Calu3 (cell line): ENCODE measurements at regions of chrX and their contacts with region 1.

Region 1: DNA sequence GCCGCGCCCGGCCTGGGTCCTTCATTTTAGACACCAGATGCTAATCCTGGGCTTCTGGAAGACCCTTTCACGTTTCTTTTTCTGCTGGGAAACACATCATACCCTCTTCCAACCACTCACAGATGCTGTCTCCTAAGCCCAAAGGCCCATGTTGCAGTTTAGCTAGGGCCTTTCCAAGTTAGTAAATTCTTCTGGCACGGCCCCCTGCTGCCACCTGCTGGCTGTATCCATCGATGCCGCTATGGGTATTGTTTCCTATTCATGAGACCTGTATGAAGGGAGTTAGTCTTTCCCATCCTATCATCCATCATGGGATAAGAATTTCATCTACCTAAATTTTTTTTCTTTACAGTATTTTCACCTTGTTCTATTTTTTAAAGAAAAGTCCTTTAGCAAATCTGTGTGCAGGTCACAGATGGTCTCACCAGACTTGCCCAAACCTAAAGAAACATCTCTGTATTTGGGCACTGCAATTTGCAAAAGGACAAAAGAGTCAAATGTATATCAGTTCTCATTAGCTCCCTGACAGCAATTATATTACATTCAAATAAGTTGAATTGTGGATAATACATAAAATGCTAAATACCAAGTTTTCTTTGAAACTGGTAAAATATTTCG is 37.8 kb upstream of the SLC9A7 start:
- DNase-seq: peak; percentile 82
- H3K4me3 Mint-ChIP-seq: no peak overlapping the region
- H3K27ac Mint-ChIP-seq: peak overlapping the region; percentile 73
- H3K4me1 Mint-ChIP-seq: peaks cover 21% of the 10 kb centered on the region
- H3K27me3 Mint-ChIP-seq: no peaks in the 10 kb centered on the region
- CTCF ChIP-seq: peak; percentile 71

Region 2: DNA sequence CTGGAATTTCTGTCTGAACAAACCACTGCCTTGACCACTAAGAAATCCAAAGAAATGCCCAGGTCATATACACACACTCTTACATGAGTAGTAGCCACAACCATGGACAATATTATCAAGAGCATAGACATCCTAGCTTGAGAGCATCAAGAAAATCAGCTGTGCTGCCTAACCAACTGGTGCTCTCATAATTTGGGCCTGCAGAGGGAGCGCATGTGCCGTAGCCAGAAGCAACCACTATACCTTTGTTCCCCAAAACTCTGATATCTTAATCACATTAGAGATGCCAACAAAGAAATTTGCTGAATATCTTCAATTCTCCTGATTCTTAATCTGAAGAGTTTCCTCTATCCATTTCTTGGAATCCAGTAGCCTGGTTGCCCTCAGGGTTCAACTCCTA is 415.1 kb before region 1 on chrX:
- CTCF ChIA-PET with region 1: no interaction called
- intact Hi-C with region 1: loop called (anchors 5 kb)
- DNase-seq: peak; percentile 53
- H3K4me3 Mint-ChIP-seq: no peak overlapping the region
- H3K27ac Mint-ChIP-seq: no peak overlapping the region
- H3K4me1 Mint-ChIP-seq: peaks cover 22% of the 10 kb centered on the region
- H3K27me3 Mint-ChIP-seq: no peaks in the 10 kb centered on the region
- CTCF ChIP-seq: no peak

Region 3: GRCh38 chrX:46554942-46555341 is 241.7 kb before region 1 on chrX:
- CTCF ChIA-PET with region 1: interaction called, 4 read pairs
- intact Hi-C with region 1: loop called (anchors 1 kb)
- DNase-seq: no peak
- H3K4me3 Mint-ChIP-seq: no peak overlapping the region
- H3K27ac Mint-ChIP-seq: no peak overlapping the region
- H3K4me1 Mint-ChIP-seq: no peaks in the 10 kb centered on the region
- H3K27me3 Mint-ChIP-seq: no peaks in the 10 kb centered on the region
- CTCF ChIP-seq: no peak

Region 4: GRCh38 chrX:46686003-46686645 is 110.6 kb before region 1 on chrX:
- CTCF ChIA-PET with region 1: no interaction called
- intact Hi-C with region 1: loop called (anchors 2 kb)
- DNase-seq: peak; percentile 17
- H3K4me3 Mint-ChIP-seq: no peak overlapping the region
- H3K27ac Mint-ChIP-seq: peak overlapping the region; percentile 61
- H3K4me1 Mint-ChIP-seq: peaks cover 8% of the 10 kb centered on the region
- H3K27me3 Mint-ChIP-seq: no peaks in the 10 kb centered on the region
- CTCF ChIP-seq: peak; percentile 38

Region 5: DNA sequence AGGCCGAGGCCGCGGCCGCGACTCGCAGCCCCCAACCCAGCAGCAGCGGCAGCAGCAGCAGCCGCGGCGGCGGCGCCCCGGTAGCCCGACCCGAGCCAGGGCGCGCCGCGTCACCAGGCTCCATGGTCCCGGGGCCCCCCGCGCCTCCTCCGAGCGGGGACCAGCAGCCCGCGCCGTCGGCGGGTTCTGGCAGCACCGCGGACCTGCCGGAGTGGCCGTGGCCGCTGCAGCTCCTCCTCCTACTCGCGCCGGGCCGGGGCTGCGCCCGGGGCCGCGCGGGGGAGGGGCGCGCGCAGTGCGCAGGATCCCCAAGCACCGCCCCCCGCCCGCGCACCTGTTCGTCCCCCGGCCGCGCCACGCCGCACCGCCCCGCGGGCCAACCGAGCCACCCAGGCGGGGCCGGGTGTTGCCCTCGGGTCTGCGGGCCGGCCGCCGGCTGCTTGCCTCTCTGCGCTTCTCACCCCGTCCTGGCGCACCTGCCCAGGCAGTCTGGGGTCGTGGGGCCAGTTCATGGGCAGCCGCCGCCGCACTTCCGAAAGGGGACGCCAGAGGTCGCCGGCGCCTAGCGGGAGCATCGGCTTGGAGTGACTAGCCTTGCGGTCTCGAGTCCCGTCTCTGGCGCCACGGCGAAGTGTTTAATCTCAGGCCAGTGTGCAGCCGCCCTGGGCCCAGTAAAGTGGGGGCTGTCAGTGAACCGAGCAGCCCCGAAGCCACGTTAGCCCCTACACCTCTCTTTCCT is 37.6 kb before region 1 on chrX and contains the start of gene SLC9A7:
- CTCF ChIA-PET with region 1: interaction called, 19 read pairs
- intact Hi-C with region 1: loop called (anchors 1 kb)
- DNase-seq: peak; percentile 92
- H3K4me3 Mint-ChIP-seq: peak within 1 kb of the TSS; percentile 96
- H3K27ac Mint-ChIP-seq: peak within 1 kb of the TSS; percentile 82
- H3K4me1 Mint-ChIP-seq: peaks cover 23% of the 10 kb centered on the region
- H3K27me3 Mint-ChIP-seq: no peaks in the 10 kb centered on the region
- CTCF ChIP-seq: peak; percentile 76
- total RNA-seq, gene SLC9A7: 66.4 and 83.3 TPM in 2 replicates

Region 6: DNA sequence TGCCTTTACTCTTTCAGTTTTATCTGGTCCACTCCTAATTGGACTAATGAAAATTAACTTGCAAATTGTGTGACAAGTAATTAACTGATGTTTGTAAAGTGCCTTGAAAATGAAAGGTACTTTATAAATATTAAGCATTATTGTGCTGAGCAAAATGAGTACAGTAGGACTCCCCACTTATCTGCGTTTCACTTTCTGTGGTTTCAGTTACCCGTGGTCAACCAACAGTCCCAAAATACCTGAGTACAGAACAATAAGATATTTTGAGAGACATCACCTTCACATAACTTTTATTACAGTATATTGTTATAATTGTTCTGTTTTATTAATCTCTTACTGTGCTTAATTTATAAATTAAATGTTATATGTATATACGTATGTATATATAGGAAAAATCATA is 88.1 kb after region 1 on chrX:
- CTCF ChIA-PET with region 1: no interaction called
- intact Hi-C with region 1: no loop called
- DNase-seq: no peak
- H3K4me3 Mint-ChIP-seq: no peak overlapping the region
- H3K27ac Mint-ChIP-seq: no peak overlapping the region
- H3K4me1 Mint-ChIP-seq: no peaks in the 10 kb centered on the region
- H3K27me3 Mint-ChIP-seq: no peaks in the 10 kb centered on the region
- CTCF ChIP-seq: no peak